ENCODE measurements at regions of chr7 and their contacts with region 1.

Region 1: GRCh38 chr7:113060100-113060499 is 26.5 kb downstream of the GPR85 start:
- DNase-seq: no peak
- H3K4me3 ChIP-seq: no peak overlapping the region
- H3K27ac ChIP-seq: no peak overlapping the region
- H3K4me1 ChIP-seq: no peaks in the 10 kb centered on the region
- H3K27me3 ChIP-seq: no peaks in the 10 kb centered on the region
- CTCF ChIP-seq: no peak
- POLR2A ChIP-seq: no peak

Region 2: DNA sequence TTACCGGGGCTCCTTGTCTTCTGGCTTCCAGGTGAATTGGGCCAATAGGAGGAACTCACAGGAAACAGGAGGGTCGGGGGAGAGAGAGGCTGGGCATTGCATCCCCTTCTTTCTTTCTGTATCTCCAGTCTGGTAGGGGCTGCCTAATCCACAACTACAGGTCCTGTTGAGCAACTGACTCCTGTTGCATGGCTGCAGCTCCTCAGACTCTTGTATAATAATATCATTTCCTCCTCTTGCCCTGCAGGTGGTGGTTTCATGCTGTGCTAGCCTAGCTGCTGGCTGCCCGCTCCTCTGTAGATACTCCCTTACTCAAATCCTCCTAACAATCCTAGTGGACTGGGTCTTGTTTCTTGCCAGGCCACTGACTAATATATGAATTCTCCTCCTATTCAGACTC is 334.8 kb after region 1 on chr7:
- intact Hi-C with region 1: loop called (anchors 5 kb)
- DNase-seq: no peak
- H3K4me3 ChIP-seq: no peak overlapping the region
- H3K27ac ChIP-seq: no peak overlapping the region
- H3K4me1 ChIP-seq: no peaks in the 10 kb centered on the region
- H3K27me3 ChIP-seq: no peaks in the 10 kb centered on the region
- CTCF ChIP-seq: no peak
- POLR2A ChIP-seq: no peak

Measured in breast epithelium (tissue), 4 donors.